Posterior vena cava (tissue), 2 donors: ENCODE measurements at regions of chr18 and their contacts with region 1.

Region 1: GRCh38 chr18:830315-830901 is 18.4 kb upstream of the YES1 start:
- DNase-seq: no peak

Region 2: DNA sequence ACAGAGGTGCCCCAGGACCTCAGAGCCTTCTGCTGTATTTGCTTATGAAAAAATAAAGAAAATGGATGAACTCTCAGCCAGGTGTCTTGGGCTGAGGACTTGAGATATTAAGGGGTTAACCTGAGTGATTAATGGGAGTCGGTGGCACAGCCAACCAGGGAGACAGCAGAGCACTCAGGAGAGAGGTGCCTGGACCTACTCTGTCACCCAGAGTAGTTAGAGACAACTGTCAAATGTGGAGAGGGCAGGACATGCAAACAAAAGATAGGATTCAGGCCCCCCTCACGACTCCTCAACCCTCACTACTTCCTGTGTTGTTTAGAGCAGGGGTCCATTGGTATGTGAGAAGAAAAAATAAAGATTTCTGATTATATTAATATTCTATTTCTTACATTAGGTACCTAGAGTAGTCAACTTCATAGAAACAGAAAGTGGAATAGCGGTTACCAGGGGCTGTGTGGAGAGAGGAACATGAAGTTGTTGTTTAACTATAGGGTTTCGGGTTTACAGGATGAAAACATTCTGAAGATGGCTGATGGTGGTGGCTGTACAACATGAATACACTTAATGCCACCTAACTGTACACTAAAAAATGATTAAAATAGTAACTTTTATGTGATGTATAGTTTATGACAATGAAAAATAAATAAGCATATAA is 278.9 kb before region 1 on chr18:
- intact Hi-C with region 1: no loop called
- DNase-seq: no peak

Region 3: DNA sequence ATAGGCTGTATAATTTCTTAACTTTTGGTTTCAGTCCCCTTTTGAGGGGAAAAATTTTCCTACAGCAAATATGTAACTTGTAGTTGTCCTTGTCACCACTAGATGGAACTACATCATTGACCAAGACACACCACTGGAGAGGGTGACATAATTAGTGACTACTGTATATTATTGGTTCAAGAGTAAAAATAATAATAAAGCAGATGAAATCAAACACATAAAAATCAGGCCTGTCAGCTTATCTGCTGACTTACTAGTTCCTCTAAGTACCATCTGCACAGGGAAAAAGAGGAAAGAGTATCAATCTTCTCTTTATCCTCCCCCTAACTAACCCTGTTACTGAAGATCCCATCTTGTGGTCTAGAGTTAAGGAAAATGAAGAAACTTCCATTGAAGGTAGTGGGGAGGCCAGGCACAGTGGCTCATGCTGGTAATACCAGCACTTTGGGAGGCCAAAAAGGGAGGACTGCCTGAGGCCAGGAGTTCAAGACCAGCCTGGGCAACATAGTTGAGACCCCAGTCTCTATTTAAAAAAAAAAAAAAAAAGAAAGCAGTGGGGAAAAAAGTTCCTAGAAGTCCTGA is 88.4 kb before region 1 on chr18:
- intact Hi-C with region 1: loop called (anchors 5 kb)
- DNase-seq: no peak

Region 4: DNA sequence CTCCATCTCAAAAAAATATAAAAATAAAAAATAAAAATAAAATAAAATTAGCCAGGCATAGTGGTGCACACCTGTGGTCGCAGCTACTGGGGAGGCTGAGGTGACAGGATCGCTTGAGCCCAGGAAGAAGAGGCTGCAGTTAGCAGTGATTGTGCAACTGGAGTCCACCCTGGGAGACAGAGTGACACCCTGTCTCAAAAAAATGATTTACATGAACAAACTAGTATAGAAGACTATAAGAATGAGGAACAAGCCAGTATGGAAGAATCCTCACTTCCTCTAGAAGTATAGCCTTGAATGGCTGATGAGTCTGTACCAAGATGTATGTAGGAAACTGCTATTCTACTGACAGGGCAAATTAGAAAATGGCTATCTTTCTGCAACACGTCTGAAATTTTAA is 29.3 kb before region 1 on chr18:
- intact Hi-C with region 1: no loop called
- DNase-seq: no peak

Region 5: GRCh38 chr18:2293109-2293839 is 1462.9 kb after region 1 on chr18:
- intact Hi-C with region 1: loop called in 1 of 2 experiments (anchors 5 kb)
- DNase-seq: no peak